Activated CD4-positive, alpha-beta T cell treated with anti-CD3 and anti-CD28 coated beads for 36 hours (primary cell): ENCODE measurements at regions of chr12 and their contacts with region 1.

Region 1: GRCh38 chr12:12696562-12697383 is 790 bp upstream of the GPR19 start:
- DNase-seq: peak; percentile 94
- ATAC-seq: peak; percentile 80
- H3K4me3 Mint-ChIP-seq: peak overlapping the region; percentile 83
- H3K27ac Mint-ChIP-seq: peak overlapping the region; percentile 99
- H3K4me1 Mint-ChIP-seq: peaks cover 53% of the 10 kb centered on the region
- H3K27me3 Mint-ChIP-seq: no peaks in the 10 kb centered on the region

Region 2: DNA sequence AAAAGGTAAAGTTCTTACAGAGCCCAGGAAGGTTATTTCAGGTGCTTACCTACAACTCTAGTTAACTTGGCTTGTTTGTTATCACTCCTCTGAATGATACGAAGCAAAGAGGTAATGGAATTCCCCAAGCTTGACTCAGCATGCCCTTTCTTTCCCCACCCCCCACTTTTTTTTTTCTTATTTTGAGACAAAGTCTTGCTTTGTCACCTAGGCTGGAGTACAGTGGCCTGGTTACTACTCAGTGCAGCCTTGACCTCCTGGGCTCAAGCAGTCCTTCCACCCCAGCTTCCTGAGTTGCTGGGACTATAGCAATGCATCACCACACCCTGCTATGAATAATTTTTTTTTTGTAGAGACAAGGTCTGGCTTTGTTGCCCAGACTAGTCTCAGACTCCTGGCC is 1956.6 kb before region 1 on chr12:
- CTCF ChIA-PET with region 1: no interaction called
- POLR2A ChIA-PET with region 1: no interaction called
- intact Hi-C with region 1: no loop called
- DNase-seq: no peak
- ATAC-seq: peak; percentile 23
- H3K4me3 Mint-ChIP-seq: no peak overlapping the region
- H3K27ac Mint-ChIP-seq: no peak overlapping the region
- H3K4me1 Mint-ChIP-seq: peaks cover 5% of the 10 kb centered on the region
- H3K27me3 Mint-ChIP-seq: peaks cover 18% of the 10 kb centered on the region

Region 3: GRCh38 chr12:12056951-12057350 is 639.8 kb before region 1 on chr12:
- CTCF ChIA-PET with region 1: no interaction called
- POLR2A ChIA-PET with region 1: no interaction called
- intact Hi-C with region 1: no loop called
- DNase-seq: no peak
- ATAC-seq: no peak
- H3K4me3 Mint-ChIP-seq: no peak overlapping the region
- H3K27ac Mint-ChIP-seq: no peak overlapping the region
- H3K4me1 Mint-ChIP-seq: no peaks in the 10 kb centered on the region
- H3K27me3 Mint-ChIP-seq: no peaks in the 10 kb centered on the region

Region 4: DNA sequence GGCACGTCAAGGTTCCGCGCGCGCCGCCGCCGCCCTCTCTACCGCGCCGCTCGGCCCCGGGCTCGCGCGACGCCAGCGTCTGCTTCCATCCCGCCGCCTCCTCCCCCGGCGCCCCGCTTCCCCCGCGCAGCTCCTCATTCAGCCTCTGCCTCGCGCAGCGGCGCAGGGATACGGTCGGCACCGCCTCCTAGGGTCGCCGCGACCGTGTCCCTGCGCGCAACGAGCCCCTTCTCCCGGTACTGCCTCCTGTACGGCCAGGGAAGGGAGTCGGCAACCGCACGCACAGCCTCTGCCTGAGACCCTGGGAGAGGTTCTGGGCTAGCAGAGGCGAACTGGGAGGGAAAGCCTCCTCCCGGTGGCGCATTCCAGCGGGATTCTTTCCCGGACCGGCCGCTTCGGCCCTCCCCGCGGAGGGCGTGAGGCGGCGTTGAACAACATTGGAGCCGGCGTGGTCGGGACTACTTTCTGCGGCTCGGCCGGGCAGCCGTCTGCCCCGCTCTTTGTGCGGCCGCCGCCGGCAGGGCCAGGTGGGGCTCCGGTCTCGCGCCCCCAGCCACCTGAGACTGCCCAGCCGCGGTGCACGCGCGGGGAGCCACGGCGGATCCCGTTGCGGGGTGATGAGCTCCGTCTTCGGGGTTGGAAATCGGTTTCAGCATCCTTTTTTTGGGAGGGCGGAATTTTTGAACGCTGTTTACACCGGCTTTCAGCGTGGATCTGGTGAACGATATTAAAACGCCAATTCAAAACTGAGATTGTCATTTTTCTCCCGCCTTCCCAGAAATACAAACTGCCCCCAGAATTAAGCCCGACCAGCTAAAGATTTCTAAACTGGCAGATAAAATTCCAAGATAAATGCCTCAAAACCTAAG is 429.7 kb before region 1 on chr12 and contains the start of gene LRP6:
- CTCF ChIA-PET with region 1: no interaction called
- POLR2A ChIA-PET with region 1: no interaction called
- intact Hi-C with region 1: loop called in 1 of 2 experiments (anchors 2 kb)
- DNase-seq: peak; percentile 90
- ATAC-seq: peak; percentile 95
- H3K4me3 Mint-ChIP-seq: peak within 1 kb of the TSS; percentile 82
- H3K27ac Mint-ChIP-seq: peak within 1 kb of the TSS; percentile 79
- H3K4me1 Mint-ChIP-seq: peaks cover 24% of the 10 kb centered on the region
- H3K27me3 Mint-ChIP-seq: peaks cover 7% of the 10 kb centered on the region
- total RNA-seq, gene LRP6: 6.8 to 8.2 TPM

Region 5: GRCh38 chr12:12442548-12443071 is 254.2 kb before region 1 on chr12:
- CTCF ChIA-PET with region 1: no interaction called
- POLR2A ChIA-PET with region 1: no interaction called
- intact Hi-C with region 1: loop called in 1 of 2 experiments (anchors 1 kb)
- DNase-seq: no peak
- ATAC-seq: peak; percentile 16
- H3K4me3 Mint-ChIP-seq: peak overlapping the region; percentile 46
- H3K27ac Mint-ChIP-seq: peak overlapping the region; percentile 98
- H3K4me1 Mint-ChIP-seq: peaks cover 81% of the 10 kb centered on the region
- H3K27me3 Mint-ChIP-seq: no peaks in the 10 kb centered on the region

Region 6: DNA sequence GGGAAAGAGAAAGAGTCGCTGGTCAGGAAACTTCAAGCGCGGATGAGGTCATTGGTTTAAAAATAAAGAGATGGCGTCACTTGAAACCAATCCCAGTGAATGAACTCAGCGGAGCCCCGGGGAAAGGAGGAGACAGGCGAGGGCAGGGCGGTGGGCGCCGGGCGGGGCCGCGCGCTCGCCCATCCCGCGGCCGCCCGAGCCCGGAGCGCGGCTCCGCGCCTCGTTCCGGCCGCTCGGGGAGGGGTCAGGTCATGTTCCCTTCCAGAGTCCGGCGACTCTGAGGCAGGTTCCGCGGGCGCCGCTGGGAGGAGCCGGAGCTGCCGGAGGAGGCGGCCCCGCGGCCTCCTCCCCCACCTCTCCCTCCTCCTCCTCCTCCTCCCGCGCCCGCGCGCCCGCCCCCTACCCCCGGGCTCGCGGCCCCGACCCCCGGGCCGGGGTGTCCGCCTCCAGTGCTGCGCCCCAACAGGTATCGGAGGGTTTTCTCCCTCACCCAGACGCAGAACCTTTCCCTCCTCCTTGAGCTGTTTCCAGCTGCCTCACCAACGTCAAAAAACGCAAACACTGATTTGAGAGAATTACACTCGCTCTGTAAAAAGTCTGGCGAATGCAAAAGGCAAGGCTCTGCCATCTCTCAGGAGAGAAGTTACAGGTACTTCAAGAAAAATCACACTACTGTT is 134.1 kb before region 1 on chr12 and contains the start of gene DUSP16:
- CTCF ChIA-PET with region 1: interaction called, 3 read pairs
- POLR2A ChIA-PET with region 1: interaction called, 5 read pairs
- intact Hi-C with region 1: loop called (anchors 1 to 2 kb)
- DNase-seq: peak; percentile 82
- ATAC-seq: peak; percentile 76
- H3K4me3 Mint-ChIP-seq: peak within 1 kb of the TSS; percentile 84
- H3K27ac Mint-ChIP-seq: peak within 1 kb of the TSS; percentile 88
- H3K4me1 Mint-ChIP-seq: peaks cover 37% of the 10 kb centered on the region
- H3K27me3 Mint-ChIP-seq: no peaks in the 10 kb centered on the region
- total RNA-seq, gene DUSP16: 39.3 to 40.4 TPM

Region 7: GRCh38 chr12:12628013-12628412 is 68.8 kb before region 1 on chr12:
- CTCF ChIA-PET with region 1: no interaction called
- POLR2A ChIA-PET with region 1: no interaction called
- intact Hi-C with region 1: no loop called
- DNase-seq: no peak
- ATAC-seq: no peak
- H3K4me3 Mint-ChIP-seq: no peak overlapping the region
- H3K27ac Mint-ChIP-seq: no peak overlapping the region
- H3K4me1 Mint-ChIP-seq: peaks cover 64% of the 10 kb centered on the region
- H3K27me3 Mint-ChIP-seq: no peaks in the 10 kb centered on the region

Region 8: GRCh38 chr12:12716793-12717585 is 20.2 kb after region 1 on chr12 and contains the start of gene CDKN1B:
- CTCF ChIA-PET with region 1: interaction called, 12 read pairs
- POLR2A ChIA-PET with region 1: interaction called, 20 read pairs
- intact Hi-C with region 1: loop called (anchors 1 kb)
- DNase-seq: peak; percentile 93
- ATAC-seq: peak; percentile 69
- H3K4me3 Mint-ChIP-seq: peak within 1 kb of the TSS; percentile 93
- H3K27ac Mint-ChIP-seq: peak within 1 kb of the TSS; percentile 98
- H3K4me1 Mint-ChIP-seq: peaks cover 53% of the 10 kb centered on the region
- H3K27me3 Mint-ChIP-seq: no peaks in the 10 kb centered on the region
- total RNA-seq, gene CDKN1B: 34.2 to 37.0 TPM

Region 9: DNA sequence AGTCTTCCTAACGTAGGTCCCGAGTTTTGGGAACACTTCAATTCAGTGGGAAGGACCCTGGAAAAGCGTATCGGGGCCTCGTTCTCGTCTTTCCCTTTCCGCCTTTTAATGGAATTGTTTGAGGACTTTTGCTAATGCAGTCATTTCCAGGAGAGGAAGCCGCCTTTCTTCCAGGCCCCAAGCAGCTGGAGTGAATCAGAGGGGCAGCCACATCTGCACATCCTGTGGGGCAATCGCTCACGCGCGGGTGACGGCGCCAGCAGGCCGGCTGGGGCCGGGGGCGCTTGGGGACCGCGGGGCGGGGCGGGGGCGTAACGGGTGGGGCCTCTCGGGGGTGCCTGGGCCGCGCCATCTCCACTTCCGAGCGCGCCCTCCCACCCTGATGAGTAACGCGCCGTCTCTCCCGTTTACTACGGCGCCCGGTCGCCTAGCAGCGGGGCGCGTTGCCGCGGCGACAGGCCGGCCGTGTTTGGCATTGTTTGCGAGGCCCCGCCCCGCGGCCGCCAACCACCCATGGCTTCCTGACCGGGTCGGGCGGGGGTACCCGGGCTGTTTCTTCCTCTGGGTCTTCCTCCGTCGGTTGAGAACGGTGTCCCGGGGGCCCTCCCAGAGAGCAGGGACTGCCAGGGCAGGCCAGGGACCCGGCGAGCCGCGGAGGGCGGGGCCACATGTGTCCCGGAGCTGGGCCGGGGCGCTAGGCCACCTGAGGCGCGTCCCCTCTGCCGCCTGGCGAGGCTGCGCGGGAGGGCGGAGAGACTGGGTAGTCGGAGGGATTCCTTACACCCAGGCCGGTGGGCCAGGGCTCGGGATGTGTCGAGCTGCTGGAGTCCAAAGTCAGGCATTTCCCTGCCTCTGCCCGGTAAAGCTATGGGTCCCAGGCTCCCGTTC is 404.4 kb after region 1 on chr12:
- CTCF ChIA-PET with region 1: no interaction called
- POLR2A ChIA-PET with region 1: no interaction called
- intact Hi-C with region 1: loop called in 1 of 2 experiments (anchors 5 kb)
- DNase-seq: peak; percentile 93
- ATAC-seq: peak; percentile 70
- H3K4me3 Mint-ChIP-seq: peak overlapping the region; percentile 63
- H3K27ac Mint-ChIP-seq: peak overlapping the region; percentile 72
- H3K4me1 Mint-ChIP-seq: peaks cover 58% of the 10 kb centered on the region
- H3K27me3 Mint-ChIP-seq: no peaks in the 10 kb centered on the region